ENCODE measurements at regions of chr5 and their contacts with region 1.

Region 1: GRCh38 chr5:53041071-53041692 is 52.0 kb downstream of the ITGA2 start:
- DNase-seq: peak; percentile 22
- H3K4me3 Mint-ChIP-seq: peak overlapping the region; percentile 57
- H3K27ac Mint-ChIP-seq: peak overlapping the region; percentile 75
- H3K4me1 Mint-ChIP-seq: peaks cover 70% of the 10 kb centered on the region
- H3K27me3 Mint-ChIP-seq: no peaks in the 10 kb centered on the region

Region 2: DNA sequence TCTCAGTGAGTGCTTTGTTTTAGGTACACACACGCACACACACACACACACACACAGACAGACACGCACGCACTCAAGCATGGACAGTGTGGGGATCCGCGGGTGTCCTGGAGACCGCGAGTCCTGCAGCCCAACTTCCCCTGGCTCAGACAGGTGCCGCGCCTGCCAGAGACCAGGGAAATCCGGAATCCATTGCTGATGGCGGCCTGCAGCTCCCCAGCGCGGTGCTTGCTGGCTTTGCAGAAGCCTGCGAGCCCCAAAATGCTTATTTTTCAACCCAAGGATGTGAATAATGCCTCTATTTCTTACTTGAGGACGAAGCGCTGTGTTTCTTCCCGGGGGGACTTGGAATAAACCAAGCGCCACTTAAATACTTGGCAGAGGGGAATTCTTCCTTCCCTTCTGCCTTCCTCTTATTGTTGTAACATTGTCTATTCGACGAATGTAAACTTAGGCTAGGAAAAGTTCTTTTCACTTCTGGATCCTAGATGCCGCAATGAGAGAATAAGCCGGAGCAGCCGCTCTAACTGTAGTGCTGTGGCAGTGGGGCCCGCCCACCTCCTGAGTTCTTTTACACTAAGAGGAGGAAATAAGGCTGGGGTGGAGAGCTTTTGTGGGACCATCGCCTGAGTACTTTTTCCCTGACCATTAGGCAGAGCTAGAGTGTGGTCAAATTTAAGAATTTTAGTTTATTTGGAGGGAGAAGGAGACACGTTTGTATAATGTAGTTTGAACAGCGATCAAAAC is 51.2 kb before region 1 on chr5:
- intact Hi-C with region 1: loop called (anchors 1 kb)
- DNase-seq: peak; percentile 21
- H3K4me3 Mint-ChIP-seq: peak overlapping the region; percentile 83
- H3K27ac Mint-ChIP-seq: peak overlapping the region; percentile 45
- H3K4me1 Mint-ChIP-seq: peaks cover 34% of the 10 kb centered on the region
- H3K27me3 Mint-ChIP-seq: peaks cover 2% of the 10 kb centered on the region

Region 3: DNA sequence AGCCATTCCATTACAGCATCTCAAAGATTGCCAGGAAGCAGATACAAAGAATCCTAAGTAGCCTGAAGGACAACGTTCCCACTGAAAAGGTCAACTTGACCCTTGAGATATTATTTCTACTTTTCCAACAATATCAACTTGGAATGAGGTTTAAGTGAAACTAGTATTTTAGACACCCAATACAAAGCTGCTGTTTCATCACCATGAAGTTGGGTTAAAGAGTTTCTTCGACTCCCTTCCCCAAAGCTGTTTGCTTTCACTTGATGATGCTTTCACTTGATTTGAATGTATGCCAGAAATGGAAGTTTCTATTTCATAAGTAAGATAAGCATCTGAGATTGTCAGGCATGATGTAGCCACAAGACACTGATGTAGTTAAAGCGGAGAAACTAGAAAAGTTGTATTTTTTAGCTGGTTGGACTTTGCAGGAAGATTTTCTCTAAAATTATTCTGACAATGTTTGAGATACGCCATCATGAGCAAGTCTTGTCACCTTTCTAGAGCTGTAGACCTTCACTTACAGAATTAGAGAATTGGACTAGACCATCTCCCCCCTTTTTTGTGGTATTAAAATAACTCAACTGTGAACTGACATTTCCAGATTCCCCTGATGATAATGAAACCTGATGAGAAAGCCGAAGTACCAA is 48.3 kb after region 1 on chr5:
- intact Hi-C with region 1: loop called (anchors 1 kb)
- DNase-seq: no peak
- H3K4me3 Mint-ChIP-seq: peak overlapping the region; percentile 53
- H3K27ac Mint-ChIP-seq: peak overlapping the region; percentile 75
- H3K4me1 Mint-ChIP-seq: peaks cover 54% of the 10 kb centered on the region
- H3K27me3 Mint-ChIP-seq: peaks cover 6% of the 10 kb centered on the region

Region 4: GRCh38 chr5:53095931-53096525 is 54.8 kb after region 1 on chr5:
- intact Hi-C with region 1: loop called (anchors 1 kb)
- DNase-seq: peak; percentile 56
- H3K4me3 Mint-ChIP-seq: no peak overlapping the region
- H3K27ac Mint-ChIP-seq: no peak overlapping the region
- H3K4me1 Mint-ChIP-seq: peaks cover 17% of the 10 kb centered on the region
- H3K27me3 Mint-ChIP-seq: no peaks in the 10 kb centered on the region

Measured in activated T-helper 1 cell treated with anti-CD3 and anti-CD28 coated beads, Interleukin-12 subunit alpha, Interleukin-12 subunit beta, Interleukin-2, Interleukin-4 antibody, amounts not matched to agents 30 ng/mL and 10 ng/mL and 1 ng/mL, durations not matched to agents 14 hours and 24 hours and 36 hours (primary cell).